Left cardiac atrium (tissue), 4 donors: ENCODE measurements at regions of chr11 and their contacts with region 1.

Region 1: DNA sequence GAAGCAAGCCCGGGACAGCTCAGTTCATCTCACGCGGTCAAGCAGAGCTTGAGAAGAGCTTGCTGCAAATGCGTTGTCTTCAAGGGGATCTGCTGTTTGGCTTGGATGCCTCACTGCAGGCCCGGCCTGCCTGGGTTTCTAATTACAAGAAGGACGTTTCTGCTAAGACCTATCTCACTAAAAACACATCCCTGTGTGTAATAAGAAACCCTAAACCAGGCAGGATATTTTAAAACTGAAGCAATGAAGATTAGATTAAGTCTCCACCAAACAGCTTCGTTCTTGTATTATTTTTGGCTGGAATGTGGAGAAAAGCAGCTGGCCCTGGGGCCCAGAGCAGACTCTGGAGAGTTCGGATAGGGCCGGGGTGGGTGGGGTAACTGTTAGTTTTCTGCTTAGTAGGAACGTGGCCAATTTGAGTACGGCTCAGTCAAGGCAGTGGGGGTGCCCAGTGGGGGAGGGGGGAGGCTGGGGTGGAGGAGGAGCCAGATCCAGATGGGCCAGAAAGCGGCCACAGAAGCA is 6.0 kb downstream of the PKNOX2 start:
- DNase-seq: peak; percentile 76
- ATAC-seq: peak; percentile 63 to 68

Region 2: DNA sequence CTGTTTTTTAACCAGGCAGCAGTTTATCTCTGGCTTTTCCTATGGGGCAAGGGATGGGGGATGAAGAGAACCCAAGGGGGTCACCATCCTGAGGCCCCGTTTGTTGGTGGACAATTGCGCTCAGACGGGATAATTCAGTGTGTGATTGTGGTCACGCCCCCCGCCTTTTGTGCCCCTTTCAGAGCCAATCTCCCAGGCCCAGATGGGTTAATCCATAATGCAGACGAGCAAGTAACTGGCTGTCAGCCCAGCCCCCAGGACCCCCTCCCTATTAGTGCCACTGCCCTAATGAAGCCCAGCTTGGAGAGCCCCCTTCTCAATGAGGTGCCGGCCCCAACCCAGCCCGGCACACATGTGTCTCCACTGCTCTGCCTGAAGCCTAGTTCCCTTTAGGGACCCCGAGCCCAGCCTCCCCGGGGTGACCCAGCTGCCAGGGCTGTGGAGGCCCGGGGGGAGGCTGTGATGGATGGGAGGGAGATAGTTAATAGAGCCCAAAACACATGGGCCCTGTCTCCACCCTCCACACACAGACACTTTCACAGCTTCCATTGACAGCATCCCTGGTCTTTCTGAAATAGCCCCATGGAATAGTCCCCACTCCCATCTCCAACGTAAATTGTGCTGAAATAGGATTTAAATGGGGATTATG is 324.4 kb before region 1 on chr11:
- intact Hi-C with region 1: no loop called
- DNase-seq: no peak
- ATAC-seq: no peak

Region 3: GRCh38 chr11:125263268-125263790 is 92.8 kb after region 1 on chr11:
- intact Hi-C with region 1: loop called in 1 of 2 experiments (anchors 10 kb)
- DNase-seq: peak; percentile 85
- ATAC-seq: peak; percentile 79 to 92

Region 4: DNA sequence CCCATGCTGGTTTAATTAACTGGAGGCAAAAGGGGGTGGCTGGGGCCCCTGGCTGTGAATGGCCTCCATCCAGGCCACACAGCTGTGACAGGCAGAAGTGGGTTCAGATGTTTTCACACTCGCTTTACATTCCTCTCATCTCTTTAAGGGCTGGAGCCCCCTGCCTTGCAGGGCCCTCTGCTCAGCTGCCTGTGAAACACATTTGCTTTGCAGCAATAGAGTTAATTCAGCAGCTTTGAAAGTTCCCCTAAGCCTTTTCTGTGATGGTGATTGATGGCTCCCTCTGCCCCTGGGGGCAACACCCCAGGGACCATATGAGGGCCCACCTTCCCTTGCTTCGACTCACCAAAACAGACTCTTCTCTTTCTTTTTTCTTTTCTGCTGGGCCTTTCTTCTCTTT is 186.2 kb after region 1 on chr11:
- intact Hi-C with region 1: no loop called
- DNase-seq: no peak
- ATAC-seq: no peak